ENCODE measurements at regions of chr19 and their contacts with region 1.

Region 1: DNA sequence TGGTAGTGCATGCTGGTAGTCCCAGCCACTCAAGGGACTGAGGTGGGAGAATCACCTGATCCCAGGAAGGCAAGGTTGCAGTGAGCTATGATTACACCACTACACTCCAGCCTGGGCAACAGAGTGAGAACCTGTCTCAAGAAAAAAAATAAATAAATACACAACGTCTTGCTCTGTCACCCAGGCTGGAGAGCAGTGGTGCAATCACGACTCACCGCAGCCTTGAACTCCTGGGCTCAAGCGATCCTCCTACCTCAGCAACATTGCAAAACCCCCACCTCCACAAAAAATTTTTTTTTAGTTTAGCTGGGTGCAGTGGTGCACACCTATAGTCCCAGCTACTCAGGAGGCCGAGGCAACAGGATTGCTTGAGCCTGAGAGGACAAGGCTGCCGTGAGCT is 8.8 kb downstream of the TPM4 start:
- DNase-seq: no peak
- H3K4me3 ChIP-seq: no peak overlapping the region
- CTCF ChIP-seq: no peak

Region 2: DNA sequence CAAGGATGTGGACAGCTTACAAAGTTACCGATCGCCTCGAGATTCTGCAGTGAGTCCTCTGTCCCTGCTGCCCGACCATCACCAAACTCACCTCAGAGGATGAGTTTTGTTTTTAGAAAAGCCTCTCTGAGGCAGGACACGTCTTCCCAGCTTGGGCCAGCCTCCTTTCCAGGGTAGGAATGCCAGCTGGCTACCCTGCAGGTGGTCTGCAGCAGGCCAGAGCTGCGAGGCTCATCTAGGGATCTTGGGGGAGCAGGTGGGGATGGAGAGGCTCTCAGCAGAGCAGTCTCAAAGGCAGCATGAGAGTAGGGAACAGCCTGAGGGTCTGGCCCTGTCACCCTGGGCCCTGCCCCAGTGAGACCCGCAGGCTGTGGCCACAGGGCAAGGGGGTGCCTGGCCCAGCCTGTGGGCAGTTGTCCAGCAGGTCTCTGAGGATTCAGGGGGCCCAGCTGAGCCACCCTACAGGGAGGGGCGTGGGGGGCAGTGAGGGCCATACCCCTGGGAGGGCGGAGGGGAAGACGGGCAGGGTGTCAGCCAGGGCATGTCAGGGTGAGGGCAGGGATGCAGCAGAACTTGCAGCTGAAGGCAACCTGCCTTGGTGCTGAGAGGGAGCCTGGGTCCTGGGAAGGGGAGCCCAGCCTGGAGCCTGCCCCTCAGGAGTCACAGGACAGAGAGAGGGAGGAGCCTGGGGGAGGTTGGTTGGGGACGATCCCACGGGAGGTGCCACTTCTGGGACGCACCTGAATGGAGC is 66.1 kb before region 1 on chr19:
- CTCF ChIA-PET with region 1: no interaction called
- POLR2A ChIA-PET with region 1: no interaction called
- DNase-seq: no peak
- H3K4me3 ChIP-seq: no peak overlapping the region
- CTCF ChIP-seq: no peak

Region 3: DNA sequence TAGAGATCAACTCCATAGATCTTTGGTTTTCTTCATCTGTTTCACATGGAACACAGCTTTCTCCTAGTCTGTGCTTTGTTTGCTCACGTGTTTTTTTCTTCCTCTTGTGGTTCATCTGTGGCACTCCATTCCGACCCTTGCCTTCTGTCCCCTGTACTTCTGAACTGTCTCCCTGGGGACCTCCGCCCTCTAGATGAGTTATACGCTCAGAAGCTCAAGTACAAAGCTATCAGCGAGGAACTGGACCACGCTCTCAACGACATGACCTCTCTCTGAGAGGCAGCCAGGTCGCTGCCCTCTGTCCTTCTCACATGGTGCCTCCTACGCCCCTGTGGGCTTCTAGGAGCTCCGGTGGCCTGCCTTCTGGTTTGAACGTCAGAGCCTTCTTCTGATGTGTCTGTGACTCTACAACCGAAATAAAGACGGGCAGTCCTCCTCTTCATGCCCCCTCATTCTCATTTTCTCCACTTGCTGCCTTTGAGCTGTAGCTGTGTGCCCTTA is 10.0 kb after region 1 on chr19:
- CTCF ChIA-PET with region 1: interaction called, 10 read pairs
- POLR2A ChIA-PET with region 1: interaction called, 15 read pairs
- DNase-seq: no peak
- H3K4me3 ChIP-seq: no peak overlapping the region
- CTCF ChIP-seq: no peak

Region 4: DNA sequence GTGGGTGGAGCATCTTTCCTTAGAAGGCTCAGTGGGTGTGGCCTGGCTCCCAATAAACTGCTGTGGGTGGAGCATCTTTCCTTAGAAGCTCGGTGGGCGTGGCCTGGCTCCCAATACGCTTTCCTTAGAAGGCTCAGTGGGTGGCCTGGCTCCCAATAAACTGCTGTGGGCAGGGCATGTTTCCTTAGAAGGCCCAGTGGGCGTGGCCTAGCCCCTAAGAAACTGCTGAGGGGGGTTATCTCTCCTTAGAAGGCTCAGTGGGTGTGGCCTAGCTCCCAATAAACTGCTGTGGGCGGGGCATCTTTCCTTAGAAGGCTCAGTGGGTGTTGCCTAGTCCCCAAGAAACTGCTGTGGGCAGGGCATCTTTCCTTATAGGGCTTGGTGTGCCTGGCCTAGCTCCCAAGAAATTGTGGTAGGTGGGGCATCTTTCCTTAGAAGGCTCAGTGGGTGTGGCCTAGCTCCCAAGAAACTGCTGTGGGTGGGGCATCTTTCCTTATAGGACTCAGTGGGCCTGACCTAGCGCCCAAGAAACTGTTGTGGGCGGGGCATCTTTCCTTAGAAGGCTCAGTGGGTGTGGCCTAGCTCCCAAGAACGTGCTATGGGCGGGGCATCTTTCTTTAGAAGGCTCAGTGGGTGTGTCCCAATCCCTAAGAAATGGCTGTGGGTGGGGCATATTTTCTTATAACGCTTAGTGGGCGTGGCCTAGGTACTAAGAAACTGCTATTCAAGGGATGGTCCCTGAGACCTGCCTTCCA is 68.6 kb after region 1 on chr19:
- CTCF ChIA-PET with region 1: no interaction called
- POLR2A ChIA-PET with region 1: no interaction called
- DNase-seq: no peak
- H3K4me3 ChIP-seq: no peak overlapping the region
- CTCF ChIP-seq: no peak